IMR-90 (cell line): ENCODE measurements at regions of chr4 and their contacts with region 1.

Region 1: GRCh38 chr4:122865425-122865824 is 38.8 kb downstream of the FGF2 start:
- DNase-seq: peak; percentile 35
- ATAC-seq: no peak
- H3K4me3 ChIP-seq: no peak overlapping the region
- H3K27ac ChIP-seq: no peak overlapping the region
- H3K4me1 ChIP-seq: peaks cover 6% of the 10 kb centered on the region
- H3K27me3 ChIP-seq: no peaks in the 10 kb centered on the region
- CTCF ChIP-seq: no peak
- POLR2A ChIP-seq: no peak
- RAD21 ChIP-seq: no peak

Region 2: DNA sequence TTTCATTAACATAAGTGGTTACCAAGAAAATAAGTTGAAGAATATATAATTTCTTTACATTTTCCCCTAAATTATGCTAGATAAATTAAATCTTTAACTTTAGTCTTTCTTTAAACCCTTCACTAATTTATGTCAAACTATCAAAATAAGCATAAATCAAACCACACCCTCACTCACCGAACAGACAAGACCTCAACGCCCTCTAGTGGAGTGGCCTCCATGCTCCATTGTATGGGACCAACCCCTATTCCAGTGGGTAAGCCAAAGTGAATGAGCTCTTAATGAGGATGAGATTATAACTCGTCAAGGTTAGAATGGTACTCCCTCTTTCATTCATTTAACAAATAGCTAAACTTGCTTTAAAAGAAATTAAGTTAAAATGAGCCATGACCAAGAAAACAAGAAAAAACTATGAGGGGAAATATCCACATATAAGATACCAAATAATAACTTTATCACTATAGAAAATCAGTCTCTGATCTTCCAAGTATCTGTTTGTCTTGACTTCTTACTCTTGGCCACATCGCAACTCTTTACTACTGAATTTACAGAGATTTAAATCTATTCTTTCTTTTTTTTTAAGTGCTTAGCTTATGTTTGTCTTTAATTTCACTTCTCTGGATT is 148.5 kb before region 1 on chr4:
- CTCF ChIA-PET with region 1: no interaction called
- POLR2A ChIA-PET with region 1: no interaction called
- dilution Hi-C with region 1: no loop called
- in situ Hi-C with region 1: no loop called
- intact Hi-C with region 1: no loop called
- DNase-seq: peak; percentile 63
- ATAC-seq: peak; percentile 90
- H3K4me3 ChIP-seq: no peak overlapping the region
- H3K27ac ChIP-seq: no peak overlapping the region
- H3K4me1 ChIP-seq: no peaks in the 10 kb centered on the region
- H3K27me3 ChIP-seq: no peaks in the 10 kb centered on the region
- CTCF ChIP-seq: peak; percentile 86
- POLR2A ChIP-seq: no peak
- RAD21 ChIP-seq: peak; percentile 80

Region 3: GRCh38 chr4:122854447-122855352 is 10.7 kb before region 1 on chr4:
- CTCF ChIA-PET with region 1: no interaction called
- POLR2A ChIA-PET with region 1: no interaction called
- dilution Hi-C with region 1: no loop called
- in situ Hi-C with region 1: no loop called
- intact Hi-C with region 1: loop called (anchors 1 kb)
- DNase-seq: no peak
- ATAC-seq: peak; percentile 44; the same call in 1 of the 2 replicates
- H3K4me3 ChIP-seq: no peak overlapping the region
- H3K27ac ChIP-seq: no peak overlapping the region
- H3K4me1 ChIP-seq: peaks cover 10% of the 10 kb centered on the region
- H3K27me3 ChIP-seq: no peaks in the 10 kb centered on the region
- CTCF ChIP-seq: no peak
- POLR2A ChIP-seq: no peak
- RAD21 ChIP-seq: no peak

Region 4: GRCh38 chr4:122882857-122883735 is 17.7 kb after region 1 on chr4:
- CTCF ChIA-PET with region 1: no interaction called
- POLR2A ChIA-PET with region 1: no interaction called
- dilution Hi-C with region 1: no loop called
- in situ Hi-C with region 1: no loop called
- intact Hi-C with region 1: no loop called
- DNase-seq: no peak
- ATAC-seq: no peak
- H3K4me3 ChIP-seq: no peak overlapping the region
- H3K27ac ChIP-seq: no peak overlapping the region
- H3K4me1 ChIP-seq: peaks cover 4% of the 10 kb centered on the region
- H3K27me3 ChIP-seq: no peaks in the 10 kb centered on the region
- CTCF ChIP-seq: no peak
- POLR2A ChIP-seq: no peak
- RAD21 ChIP-seq: no peak